ENCODE measurements at regions of chr5 and their contacts with region 1.

Region 1: GRCh38 chr5:174724491-174725260 is at the start of gene MSX2:
- DNase-seq: peak; percentile 93 to 95
- H3K4me3 ChIP-seq: peak within 1 kb of the TSS; percentile 94
- H3K4me3 Mint-ChIP-seq: peak within 1 kb of the TSS; percentile 93
- H3K27ac Mint-ChIP-seq: peak within 1 kb of the TSS; percentile 91
- H3K4me1 ChIP-seq: peaks cover 54% of the 10 kb centered on the region
- H3K4me1 Mint-ChIP-seq: peaks cover 45% of the 10 kb centered on the region
- H3K27me3 ChIP-seq: no peaks in the 10 kb centered on the region
- H3K27me3 Mint-ChIP-seq: no peaks in the 10 kb centered on the region
- CTCF ChIP-seq: no peak
- total RNA-seq, gene MSX2: 59.7 and 64.4 TPM in 2 replicates

Region 2: DNA sequence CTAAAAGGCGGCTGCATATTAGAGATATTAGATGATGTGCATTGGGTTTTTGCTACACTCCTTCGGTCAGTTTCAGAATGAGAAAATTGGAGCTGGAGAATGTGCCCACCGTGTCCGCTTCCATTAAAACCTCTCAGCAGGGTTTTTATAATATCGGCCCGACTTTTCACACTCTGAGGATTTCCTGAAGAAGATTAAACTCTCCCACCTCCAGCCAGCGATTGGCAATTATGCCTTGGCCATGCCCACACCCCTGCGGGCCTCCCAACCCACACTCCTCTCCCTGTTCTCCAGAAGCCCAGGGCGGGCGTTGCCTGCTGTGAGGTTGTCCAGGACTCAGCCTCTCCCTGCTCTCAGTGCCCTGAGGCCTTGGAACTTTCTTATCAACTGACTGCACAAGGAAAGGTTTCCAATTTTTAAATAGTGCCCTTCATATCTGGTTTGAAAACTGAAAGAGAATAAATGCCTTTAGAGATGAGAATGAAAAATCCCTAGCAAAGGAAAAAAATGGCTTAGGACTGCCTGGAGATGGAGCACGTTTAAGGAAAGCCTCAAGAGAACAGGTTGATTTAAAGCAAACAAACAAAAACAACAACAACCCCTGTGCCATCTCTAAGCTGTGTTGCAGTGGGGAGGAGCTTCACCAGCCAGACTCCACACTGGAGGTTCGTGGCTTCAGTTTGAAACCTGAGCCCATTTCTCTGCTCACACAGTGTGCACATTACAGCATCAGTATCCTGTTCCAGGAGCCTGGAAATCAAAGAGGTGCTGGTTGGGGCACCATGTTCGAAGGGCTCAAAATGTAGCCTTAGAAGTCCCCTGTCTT is 386.3 kb before region 1 on chr5:
- CTCF ChIA-PET with region 1: no interaction called
- POLR2A ChIA-PET with region 1: interaction called, 3 read pairs
- intact Hi-C with region 1: loop called (anchors 2 kb)
- DNase-seq: peak; percentile 26 to 75
- H3K4me3 ChIP-seq: no peak overlapping the region
- H3K4me3 Mint-ChIP-seq: peak overlapping the region; percentile 58
- H3K27ac Mint-ChIP-seq: peak overlapping the region; percentile 82
- H3K4me1 ChIP-seq: peaks cover 25% of the 10 kb centered on the region
- H3K4me1 Mint-ChIP-seq: peaks cover 38% of the 10 kb centered on the region
- H3K27me3 ChIP-seq: no peaks in the 10 kb centered on the region
- H3K27me3 Mint-ChIP-seq: no peaks in the 10 kb centered on the region
- CTCF ChIP-seq: no peak

Region 3: GRCh38 chr5:174581479-174581878 is 143.2 kb before region 1 on chr5:
- CTCF ChIA-PET with region 1: no interaction called
- POLR2A ChIA-PET with region 1: interaction called, 17 read pairs
- intact Hi-C with region 1: no loop called
- DNase-seq: peak; percentile 61 to 72
- H3K4me3 ChIP-seq: no peak overlapping the region
- H3K4me3 Mint-ChIP-seq: no peak overlapping the region
- H3K27ac Mint-ChIP-seq: no peak overlapping the region
- H3K4me1 ChIP-seq: peaks cover 9% of the 10 kb centered on the region; the same call in 1 of the 2 replicates
- H3K4me1 Mint-ChIP-seq: peaks cover 16% of the 10 kb centered on the region
- H3K27me3 ChIP-seq: no peaks in the 10 kb centered on the region
- H3K27me3 Mint-ChIP-seq: no peaks in the 10 kb centered on the region
- CTCF ChIP-seq: peak; percentile 68 to 70

Region 4: GRCh38 chr5:174618032-174618324 is 106.7 kb before region 1 on chr5:
- CTCF ChIA-PET with region 1: no interaction called
- POLR2A ChIA-PET with region 1: interaction called, 11 read pairs
- intact Hi-C with region 1: loop called (anchors 1 kb)
- DNase-seq: peak in 1 of 2 experiments; percentile 44
- H3K4me3 ChIP-seq: no peak overlapping the region
- H3K4me3 Mint-ChIP-seq: peak overlapping the region; percentile 4
- H3K27ac Mint-ChIP-seq: peak overlapping the region; percentile 63
- H3K4me1 ChIP-seq: peaks cover 76% of the 10 kb centered on the region
- H3K4me1 Mint-ChIP-seq: peaks cover 64% of the 10 kb centered on the region
- H3K27me3 ChIP-seq: no peaks in the 10 kb centered on the region
- H3K27me3 Mint-ChIP-seq: no peaks in the 10 kb centered on the region
- CTCF ChIP-seq: no peak

Region 5: DNA sequence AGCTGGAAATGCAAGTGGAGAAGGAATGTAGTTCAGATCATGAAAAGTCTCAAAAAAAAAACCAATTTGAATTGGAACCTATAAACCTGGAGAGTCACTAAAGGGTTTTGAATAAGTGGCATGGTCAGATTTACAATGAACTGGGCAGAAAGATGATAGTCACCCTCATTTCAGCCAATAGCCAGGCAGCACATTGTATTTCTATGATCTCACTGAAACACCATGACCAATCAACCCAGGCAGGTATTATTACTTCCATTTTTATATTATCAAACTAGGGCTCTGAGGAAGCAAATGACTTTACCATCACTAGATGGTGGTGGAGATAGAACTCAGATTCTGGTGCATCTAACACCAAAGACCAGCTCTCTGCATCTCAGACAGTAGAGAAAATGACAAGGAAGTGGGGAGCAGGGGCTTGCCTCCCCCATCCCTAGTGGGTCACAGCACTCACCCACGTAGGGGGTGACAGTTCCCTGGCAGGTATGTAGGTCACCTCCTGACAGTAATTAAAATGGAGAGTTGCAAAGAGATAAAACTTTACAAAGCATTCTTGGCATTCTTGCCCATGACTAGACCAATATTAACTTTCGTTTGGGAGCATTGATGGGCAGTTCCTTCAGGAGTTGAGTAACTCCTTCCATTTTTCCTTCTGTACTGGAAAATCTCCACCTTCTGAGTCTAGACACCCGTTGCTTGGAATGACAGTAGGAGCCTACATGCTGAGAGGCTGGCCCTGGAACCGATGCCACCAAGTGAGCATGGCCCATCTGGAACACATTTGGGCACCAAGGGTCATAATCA is 82.0 kb before region 1 on chr5:
- CTCF ChIA-PET with region 1: no interaction called
- POLR2A ChIA-PET with region 1: no interaction called
- intact Hi-C with region 1: loop called (anchors 2 kb)
- DNase-seq: peak; percentile 72 to 73
- H3K4me3 ChIP-seq: no peak overlapping the region
- H3K4me3 Mint-ChIP-seq: peak overlapping the region; percentile 25
- H3K27ac Mint-ChIP-seq: peak overlapping the region; percentile 61
- H3K4me1 ChIP-seq: peaks cover 40% of the 10 kb centered on the region
- H3K4me1 Mint-ChIP-seq: peaks cover 48% of the 10 kb centered on the region
- H3K27me3 ChIP-seq: no peaks in the 10 kb centered on the region
- H3K27me3 Mint-ChIP-seq: no peaks in the 10 kb centered on the region
- CTCF ChIP-seq: no peak

Region 6: GRCh38 chr5:174706997-174707572 is 17.6 kb before region 1 on chr5:
- CTCF ChIA-PET with region 1: no interaction called
- POLR2A ChIA-PET with region 1: no interaction called
- intact Hi-C with region 1: no loop called
- DNase-seq: peak in 1 of 2 experiments; percentile 8
- H3K4me3 ChIP-seq: no peak overlapping the region
- H3K4me3 Mint-ChIP-seq: peak overlapping the region; percentile 46
- H3K27ac Mint-ChIP-seq: no peak overlapping the region
- H3K4me1 ChIP-seq: peaks cover 18% of the 10 kb centered on the region
- H3K4me1 Mint-ChIP-seq: peaks cover 32% of the 10 kb centered on the region
- H3K27me3 ChIP-seq: no peaks in the 10 kb centered on the region
- H3K27me3 Mint-ChIP-seq: no peaks in the 10 kb centered on the region
- CTCF ChIP-seq: no peak

Region 7: GRCh38 chr5:174735498-174736330 is 11.0 kb after region 1 on chr5:
- CTCF ChIA-PET with region 1: interaction called, 3 read pairs
- POLR2A ChIA-PET with region 1: interaction called, 3 read pairs
- intact Hi-C with region 1: loop called (anchors 1 kb)
- DNase-seq: peak; percentile 87 to 90
- H3K4me3 ChIP-seq: peak overlapping the region; percentile 50
- H3K4me3 Mint-ChIP-seq: peak overlapping the region; percentile 86
- H3K27ac Mint-ChIP-seq: peak overlapping the region; percentile 52
- H3K4me1 ChIP-seq: peaks cover 36% of the 10 kb centered on the region
- H3K4me1 Mint-ChIP-seq: peaks cover 24% of the 10 kb centered on the region
- H3K27me3 ChIP-seq: no peaks in the 10 kb centered on the region
- H3K27me3 Mint-ChIP-seq: no peaks in the 10 kb centered on the region
- CTCF ChIP-seq: peak; percentile 74 to 90

Region 8: DNA sequence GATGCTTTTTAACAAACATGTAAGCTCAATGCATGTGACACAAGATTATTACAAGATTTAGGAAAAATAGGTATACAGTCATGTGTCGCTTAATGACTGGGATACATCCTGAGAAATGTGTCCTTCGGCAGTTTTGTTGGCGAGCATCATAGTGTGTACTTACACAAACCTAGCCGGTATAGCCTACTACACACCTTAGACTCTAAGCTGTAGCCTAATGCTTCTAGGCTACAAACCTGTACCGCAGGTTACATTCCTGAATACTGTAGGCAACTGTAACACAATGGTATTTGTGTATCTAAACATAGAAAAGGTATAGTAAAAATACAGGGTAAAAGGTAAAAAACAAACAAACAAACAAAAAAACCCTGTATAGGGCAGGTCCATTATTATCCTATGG is 27.4 kb after region 1 on chr5:
- CTCF ChIA-PET with region 1: no interaction called
- POLR2A ChIA-PET with region 1: no interaction called
- intact Hi-C with region 1: no loop called
- DNase-seq: no peak
- H3K4me3 ChIP-seq: no peak overlapping the region; the same call in 1 of the 2 replicates
- H3K4me3 Mint-ChIP-seq: peak overlapping the region; percentile 76
- H3K27ac Mint-ChIP-seq: no peak overlapping the region
- H3K4me1 ChIP-seq: no peaks in the 10 kb centered on the region
- H3K4me1 Mint-ChIP-seq: peaks cover 6% of the 10 kb centered on the region
- H3K27me3 ChIP-seq: no peaks in the 10 kb centered on the region
- H3K27me3 Mint-ChIP-seq: no peaks in the 10 kb centered on the region
- CTCF ChIP-seq: no peak

Region 9: GRCh38 chr5:174793684-174794328 is 69.1 kb after region 1 on chr5:
- CTCF ChIA-PET with region 1: no interaction called
- POLR2A ChIA-PET with region 1: no interaction called
- intact Hi-C with region 1: no loop called
- DNase-seq: peak; percentile 61 to 81
- H3K4me3 ChIP-seq: no peak overlapping the region
- H3K4me3 Mint-ChIP-seq: peak overlapping the region; percentile 13
- H3K27ac Mint-ChIP-seq: no peak overlapping the region
- H3K4me1 ChIP-seq: no peaks in the 10 kb centered on the region
- H3K4me1 Mint-ChIP-seq: peaks cover 7% of the 10 kb centered on the region
- H3K27me3 ChIP-seq: no peaks in the 10 kb centered on the region
- H3K27me3 Mint-ChIP-seq: no peaks in the 10 kb centered on the region
- CTCF ChIP-seq: peak; percentile 97 to 98

Measured in Caco-2 (cell line).